ENCODE measurements at regions of chr7 and their contacts with region 1.

Region 1: DNA sequence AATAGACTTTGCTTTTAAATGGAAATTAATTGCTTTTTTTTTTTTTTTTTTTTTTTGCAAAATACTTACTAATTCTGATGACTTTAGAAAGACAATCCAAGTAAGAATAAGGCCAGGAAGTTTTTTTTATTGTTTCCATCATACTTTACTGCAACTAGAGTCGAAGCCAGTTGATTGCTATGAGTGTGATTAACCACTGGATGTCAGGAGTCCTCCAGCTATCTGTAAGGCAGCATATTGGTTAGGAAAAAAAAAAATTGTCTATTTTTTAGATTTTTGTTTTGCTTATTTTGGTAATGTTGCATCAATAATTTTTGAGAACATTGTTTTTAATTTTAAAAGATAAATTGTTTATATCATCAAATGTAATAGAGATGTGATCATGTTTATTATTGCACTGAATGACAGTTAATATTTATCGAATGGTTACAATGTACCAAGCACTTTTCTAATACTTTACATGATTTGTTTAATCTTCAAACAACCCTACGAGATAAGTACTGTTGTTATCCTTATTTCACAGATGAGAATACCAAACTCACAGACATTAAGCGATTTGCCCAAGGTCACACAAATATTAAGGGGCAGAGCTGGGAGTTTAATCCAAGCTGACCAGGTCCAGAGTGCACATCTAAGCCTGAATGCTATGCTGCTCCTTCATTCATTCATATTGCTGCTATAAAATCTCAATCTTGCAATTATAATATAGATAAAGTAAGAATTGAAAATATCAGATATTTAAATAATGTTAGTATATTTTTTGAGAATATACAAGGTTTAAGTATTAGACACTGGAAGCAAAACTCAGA is 19.9 kb upstream of the LMOD2 start:
- DNase-seq: no peak
- ATAC-seq: peak; percentile 54 to 84 (median 72)
- H3K4me3 ChIP-seq: no peak overlapping the region
- H3K27ac ChIP-seq: peak overlapping the region; percentile 69
- H3K4me1 ChIP-seq: peaks cover 50% of the 10 kb centered on the region
- H3K27me3 ChIP-seq: no peaks in the 10 kb centered on the region
- CTCF ChIP-seq: peak; percentile 75

Region 2: DNA sequence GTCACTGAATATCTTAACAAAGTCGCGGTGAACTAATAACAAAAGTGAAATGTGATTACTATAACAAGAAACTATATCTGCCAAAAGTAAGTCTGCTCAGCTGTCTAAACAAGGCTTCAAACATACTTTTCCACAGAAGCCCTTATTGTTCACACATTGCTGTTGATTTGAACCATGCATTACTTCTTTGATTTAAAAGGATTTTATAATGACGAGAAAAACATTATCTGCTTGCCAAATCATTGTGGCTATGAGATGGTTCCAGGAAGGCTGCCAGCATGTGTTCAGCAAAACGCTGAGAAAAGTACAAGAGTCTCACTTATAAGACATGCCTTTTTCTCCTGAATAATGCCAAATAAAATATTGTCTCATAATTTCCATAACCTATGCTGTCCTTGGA is 961.3 kb before region 1 on chr7:
- intact Hi-C with region 1: no loop called
- DNase-seq: no peak
- ATAC-seq: no peak
- H3K4me3 ChIP-seq: no peak overlapping the region
- H3K27ac ChIP-seq: no peak overlapping the region
- H3K4me1 ChIP-seq: no peaks in the 10 kb centered on the region
- H3K27me3 ChIP-seq: no peaks in the 10 kb centered on the region
- CTCF ChIP-seq: no peak

Region 3: DNA sequence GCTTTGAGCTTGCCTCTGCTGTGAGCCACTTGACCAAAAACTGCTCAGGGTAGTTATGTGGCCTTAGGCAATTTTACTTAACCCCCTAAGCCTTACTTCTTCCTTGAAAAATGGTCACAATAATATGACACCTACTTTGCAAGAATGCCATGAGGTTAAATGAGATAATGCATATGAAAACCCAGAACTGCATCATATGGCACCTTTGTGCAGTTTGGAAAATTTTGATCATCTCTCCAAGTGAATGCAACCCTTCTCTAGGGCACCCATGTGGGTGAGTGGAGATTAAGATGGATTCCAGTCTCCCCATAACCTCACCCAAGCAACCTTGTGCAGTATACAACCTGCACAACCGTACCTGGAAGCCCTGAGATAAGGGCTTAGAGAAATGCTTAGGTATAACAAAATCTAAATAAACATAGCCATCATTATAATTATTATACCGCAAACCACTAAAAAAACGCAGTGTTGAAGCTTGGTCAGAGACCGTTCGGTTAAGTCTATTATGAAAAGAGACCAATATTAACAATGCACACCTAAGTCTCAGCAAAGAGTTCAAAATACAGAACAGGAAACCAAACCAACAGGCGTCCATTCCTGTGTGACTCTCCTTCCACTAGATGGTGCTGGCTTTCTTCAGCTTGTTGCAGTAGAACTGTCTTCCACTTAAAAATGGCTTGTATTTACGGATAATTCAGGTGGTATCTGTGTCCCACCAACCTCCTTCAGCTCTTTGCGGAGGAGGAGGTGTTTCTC is 55.2 kb before region 1 on chr7:
- intact Hi-C with region 1: loop called (anchors 5 kb)
- DNase-seq: no peak
- ATAC-seq: peak; percentile 76 to 87 (median 78)
- H3K4me3 ChIP-seq: no peak overlapping the region
- H3K27ac ChIP-seq: peak overlapping the region; percentile 37
- H3K4me1 ChIP-seq: peaks cover 5% of the 10 kb centered on the region
- H3K27me3 ChIP-seq: no peaks in the 10 kb centered on the region
- CTCF ChIP-seq: peak; percentile 77

Region 4: DNA sequence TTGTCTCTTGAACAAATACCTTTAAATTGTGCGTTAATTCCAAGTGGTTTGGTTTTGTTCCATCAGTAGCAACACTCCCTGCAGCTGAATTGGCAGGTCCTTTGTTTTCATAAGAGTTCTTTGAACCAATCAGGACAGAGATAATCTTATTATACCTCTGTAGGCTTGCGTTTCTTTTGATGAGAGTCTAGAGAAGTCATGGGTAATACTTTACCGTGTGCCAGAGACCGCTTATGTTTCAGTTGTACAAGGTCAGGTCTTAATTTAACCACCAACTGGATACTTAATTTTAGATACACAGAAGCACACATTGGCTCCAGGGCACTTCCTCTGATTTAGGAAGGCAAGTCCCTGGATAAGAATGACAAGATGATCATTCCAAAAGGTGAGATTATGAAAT is 34.2 kb before region 1 on chr7 and contains the start of gene ASB15:
- intact Hi-C with region 1: loop called in 1 of 2 experiments (anchors 5 kb)
- DNase-seq: no peak
- ATAC-seq: peak; percentile 92 to 99 (median 96)
- H3K4me3 ChIP-seq: peak within 1 kb of the TSS; percentile 64
- H3K27ac ChIP-seq: peak within 1 kb of the TSS; percentile 87
- H3K4me1 ChIP-seq: peaks cover 31% of the 10 kb centered on the region
- H3K27me3 ChIP-seq: no peaks in the 10 kb centered on the region
- CTCF ChIP-seq: no peak
- total RNA-seq, gene ASB15: 8.2 to 23.6 (median 11.5) TPM

Region 5: GRCh38 chr7:123674399-123675180 is 38.8 kb after region 1 on chr7:
- intact Hi-C with region 1: loop called in 1 of 2 experiments (anchors 5 kb)
- DNase-seq: no peak
- ATAC-seq: peak; percentile 42 to 73 (median 60)
- H3K4me3 ChIP-seq: peak overlapping the region; percentile 44
- H3K27ac ChIP-seq: peak overlapping the region; percentile 90
- H3K4me1 ChIP-seq: peaks cover 55% of the 10 kb centered on the region
- H3K27me3 ChIP-seq: no peaks in the 10 kb centered on the region
- CTCF ChIP-seq: no peak

Region 6: DNA sequence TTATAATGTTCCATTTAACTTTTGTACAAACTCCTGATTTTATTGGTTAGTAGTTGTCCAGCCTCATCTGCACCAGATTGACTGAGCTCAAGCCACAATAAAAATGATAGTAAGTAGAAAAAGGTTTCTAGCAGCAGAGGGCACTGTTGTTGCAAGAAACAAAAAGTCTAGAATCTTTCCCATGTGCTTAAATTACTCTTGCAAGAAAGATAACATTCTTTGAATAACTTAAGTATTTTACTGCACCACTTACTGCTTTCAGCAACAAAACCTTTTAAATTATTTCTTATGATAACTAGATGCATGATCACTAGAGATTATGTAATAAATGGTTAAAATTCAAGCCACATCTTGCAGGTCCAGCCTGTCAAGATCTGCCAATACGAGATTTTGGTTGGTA is 46.9 kb after region 1 on chr7:
- intact Hi-C with region 1: loop called (anchors 5 to 10 kb)
- DNase-seq: no peak
- ATAC-seq: peak in 2 of 4 donors; percentile 42 to 54
- H3K4me3 ChIP-seq: no peak overlapping the region
- H3K27ac ChIP-seq: peak overlapping the region; percentile 81
- H3K4me1 ChIP-seq: peaks cover 47% of the 10 kb centered on the region
- H3K27me3 ChIP-seq: no peaks in the 10 kb centered on the region
- CTCF ChIP-seq: peak; percentile 54

Region 7: GRCh38 chr7:123705211-123705901 is 69.6 kb after region 1 on chr7:
- intact Hi-C with region 1: loop called (anchors 2 to 5 kb)
- DNase-seq: no peak
- ATAC-seq: no peak
- H3K4me3 ChIP-seq: no peak overlapping the region
- H3K27ac ChIP-seq: no peak overlapping the region
- H3K4me1 ChIP-seq: peaks cover 14% of the 10 kb centered on the region
- H3K27me3 ChIP-seq: no peaks in the 10 kb centered on the region
- CTCF ChIP-seq: no peak

Region 8: DNA sequence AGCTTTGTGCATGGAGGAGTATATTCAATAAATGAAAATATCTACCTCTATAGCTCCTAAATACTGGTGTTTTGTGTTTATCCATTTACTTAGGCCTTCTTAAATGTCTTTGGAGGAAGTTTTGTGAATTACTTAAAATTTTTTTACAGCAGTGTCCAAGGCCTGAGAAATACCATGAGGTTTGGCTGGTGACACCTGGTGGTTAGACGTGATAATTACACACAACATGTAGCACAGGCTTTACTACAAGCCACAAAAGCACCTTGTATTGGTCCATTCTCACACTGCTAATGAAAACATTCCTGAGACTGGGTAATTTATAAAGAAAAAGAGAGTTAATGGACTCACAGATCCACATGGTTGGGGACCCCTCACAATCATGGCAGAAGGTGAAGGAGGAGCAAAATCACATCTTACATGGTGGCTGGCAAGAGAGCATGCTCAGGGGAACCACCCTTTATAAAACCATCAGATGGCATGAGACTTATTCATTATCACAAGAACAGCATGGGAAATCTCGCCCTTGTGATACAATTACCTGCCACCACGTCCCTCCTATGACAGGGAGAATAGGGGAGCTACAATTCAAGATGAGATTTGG is 229.9 kb after region 1 on chr7:
- intact Hi-C with region 1: loop called in 1 of 2 experiments (anchors 2 kb)
- DNase-seq: no peak
- ATAC-seq: peak; percentile 80 to 93 (median 86)
- H3K4me3 ChIP-seq: no peak overlapping the region
- H3K27ac ChIP-seq: no peak overlapping the region
- H3K4me1 ChIP-seq: no peaks in the 10 kb centered on the region
- H3K27me3 ChIP-seq: no peaks in the 10 kb centered on the region
- CTCF ChIP-seq: peak; percentile 85

Measured in psoas muscle (tissue), 8 donors.